ENCODE measurements at regions of chr19 and their contacts with region 1.

Region 1: GRCh38 chr19:17511724-17512573 is 500 bp downstream of the PGLS start:
- DNase-seq: peak; percentile 94
- ATAC-seq: peak; percentile 66
- H3K4me3 Mint-ChIP-seq: peak overlapping the region; percentile 98
- H3K27ac Mint-ChIP-seq: peak overlapping the region; percentile 99
- H3K4me1 Mint-ChIP-seq: peaks cover 28% of the 10 kb centered on the region
- H3K27me3 Mint-ChIP-seq: no peaks in the 10 kb centered on the region

Region 2: DNA sequence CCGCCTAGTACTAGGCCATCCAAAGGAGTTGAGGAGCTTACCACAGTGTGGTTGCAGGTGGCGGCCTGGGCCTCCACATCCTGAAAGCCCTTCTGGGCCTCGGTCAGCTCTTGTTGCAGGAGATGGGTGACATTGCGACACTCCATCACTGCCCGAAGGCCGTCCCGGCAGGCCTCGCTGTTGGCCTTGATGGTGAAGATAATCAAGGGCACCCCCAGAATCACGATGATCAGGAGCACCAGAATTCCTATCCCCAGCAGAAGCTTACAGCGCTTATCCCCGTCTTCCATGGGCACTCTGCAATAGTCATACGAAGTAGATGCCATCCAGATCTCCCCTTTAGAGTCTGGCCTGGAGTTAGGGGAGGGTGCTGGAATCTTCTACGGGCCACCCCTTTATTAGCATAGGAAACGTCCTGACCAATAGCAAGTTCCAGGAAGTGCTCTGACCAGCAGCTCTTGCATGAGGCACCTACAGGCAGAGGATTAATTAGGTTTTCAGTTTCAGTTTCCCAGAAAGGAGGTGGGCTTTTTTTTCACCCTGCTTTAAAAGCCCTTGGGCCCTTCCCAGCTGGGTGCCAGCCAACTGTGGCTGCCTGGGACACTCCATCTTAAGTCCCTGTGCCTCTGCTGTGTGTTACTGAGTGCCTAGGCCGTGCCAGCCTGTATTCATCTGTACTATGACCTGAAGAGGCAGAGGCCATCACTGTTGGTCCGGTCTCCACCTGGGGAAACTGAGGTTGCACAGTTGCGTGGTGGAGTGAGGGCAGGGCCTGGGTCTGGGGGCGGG is 106.5 kb before region 1 on chr19 and contains the start of gene BST2:
- POLR2A ChIA-PET with region 1: no interaction called
- DNase-seq: peak; percentile 71
- ATAC-seq: peak; percentile 83
- H3K4me3 Mint-ChIP-seq: peak within 1 kb of the TSS; percentile 89
- H3K27ac Mint-ChIP-seq: peak within 1 kb of the TSS; percentile 91
- H3K4me1 Mint-ChIP-seq: peaks cover 27% of the 10 kb centered on the region
- H3K27me3 Mint-ChIP-seq: no peaks in the 10 kb centered on the region
- total RNA-seq, gene BST2: 197 to 201 TPM

Region 3: GRCh38 chr19:17419621-17420466 is 92.1 kb before region 1 on chr19 and contains the start of gene MVB12A:
- POLR2A ChIA-PET with region 1: no interaction called
- DNase-seq: peak; percentile 94
- ATAC-seq: peak; percentile 84
- H3K4me3 Mint-ChIP-seq: peak within 1 kb of the TSS; percentile 96
- H3K27ac Mint-ChIP-seq: peak within 1 kb of the TSS; percentile 93
- H3K4me1 Mint-ChIP-seq: peaks cover 10% of the 10 kb centered on the region
- H3K27me3 Mint-ChIP-seq: no peaks in the 10 kb centered on the region
- total RNA-seq, gene MVB12A: 34.1 to 40.3 TPM

Region 4: GRCh38 chr19:17496337-17496997 is 15.5 kb before region 1 on chr19:
- POLR2A ChIA-PET with region 1: interaction called, 12 read pairs
- DNase-seq: peak; percentile 88
- ATAC-seq: peak; percentile 94
- H3K4me3 Mint-ChIP-seq: peak overlapping the region; percentile 48
- H3K27ac Mint-ChIP-seq: peak overlapping the region; percentile 60
- H3K4me1 Mint-ChIP-seq: peaks cover 31% of the 10 kb centered on the region
- H3K27me3 Mint-ChIP-seq: no peaks in the 10 kb centered on the region

Region 5: DNA sequence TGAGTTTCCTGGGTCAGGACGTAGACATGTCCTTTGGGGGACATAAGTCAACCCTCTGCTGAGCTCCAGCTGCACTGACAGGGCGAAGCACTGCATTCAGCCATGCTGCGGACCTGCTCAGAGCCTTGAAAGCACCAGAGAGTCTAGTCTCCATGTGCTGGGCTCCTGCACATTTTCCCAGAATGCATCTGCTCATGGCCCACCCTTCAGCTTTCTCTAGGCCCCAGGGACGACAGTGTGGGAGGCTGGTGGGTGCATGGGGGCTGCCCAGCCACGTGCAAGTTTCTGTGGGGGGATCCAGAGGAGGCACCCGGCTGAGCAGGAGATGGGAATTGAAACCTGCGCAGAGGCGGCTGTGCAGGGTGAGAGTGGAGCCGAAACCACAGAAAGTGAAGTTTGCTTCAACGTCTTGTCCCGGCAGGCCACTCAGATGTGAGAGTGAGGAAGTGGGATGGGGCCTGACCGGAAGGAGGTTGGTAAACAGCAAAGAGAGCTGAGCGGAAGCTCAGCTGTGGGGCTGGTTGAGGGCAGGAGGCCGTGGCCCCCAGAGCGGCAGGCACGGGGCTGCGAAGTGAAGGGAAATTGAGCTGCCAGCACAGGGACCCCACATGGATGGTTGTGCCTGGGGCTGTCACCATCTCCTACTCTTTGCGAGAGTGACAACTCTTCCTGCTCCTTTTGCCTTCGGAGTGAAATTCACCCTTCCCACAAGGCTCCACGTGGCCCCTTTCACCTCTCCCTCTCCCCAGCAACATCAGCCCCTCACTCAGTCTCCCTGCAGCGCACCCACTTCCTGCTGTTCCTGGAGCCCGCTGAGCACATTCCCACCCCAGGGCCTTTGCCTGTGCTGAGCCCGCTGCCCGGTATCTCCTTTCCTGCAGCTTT is 11.3 kb after region 1 on chr19:
- POLR2A ChIA-PET with region 1: interaction called, 88 read pairs
- DNase-seq: peak; percentile 76
- ATAC-seq: peak; percentile 93
- H3K4me3 Mint-ChIP-seq: peak overlapping the region; percentile 57
- H3K27ac Mint-ChIP-seq: peak overlapping the region; percentile 91
- H3K4me1 Mint-ChIP-seq: peaks cover 24% of the 10 kb centered on the region
- H3K27me3 Mint-ChIP-seq: no peaks in the 10 kb centered on the region

Region 6: GRCh38 chr19:17555480-17555928 is 43.6 kb after region 1 on chr19 and contains the start of gene COLGALT1:
- POLR2A ChIA-PET with region 1: interaction called, 10 read pairs
- DNase-seq: peak; percentile 98
- ATAC-seq: peak; percentile 92
- H3K4me3 Mint-ChIP-seq: peak within 1 kb of the TSS; percentile 88
- H3K27ac Mint-ChIP-seq: peak within 1 kb of the TSS; percentile 79
- H3K4me1 Mint-ChIP-seq: peaks cover 18% of the 10 kb centered on the region
- H3K27me3 Mint-ChIP-seq: no peaks in the 10 kb centered on the region
- total RNA-seq, gene COLGALT1: 63.3 to 68.4 TPM

Measured in activated naive CD8-positive, alpha-beta T cell treated with anti-CD3 and anti-CD28 coated beads, Interleukin-2, amount 10 ng/mL, durations not matched to agents 7 days and 5 days (primary cell).